ENCODE measurements at regions of chr4 and their contacts with region 1.

Region 1: GRCh38 chr4:87370068-87370467 is 20.9 kb downstream of the HSD17B11 start:
- DNase-seq: no peak
- H3K4me3 ChIP-seq: no peak overlapping the region
- CTCF ChIP-seq: no peak
- POLR2A ChIP-seq: no peak

Region 2: GRCh38 chr4:87304671-87305432 is 65.2 kb before region 1 on chr4:
- intact Hi-C with region 1: no loop called
- DNase-seq: no peak
- H3K4me3 ChIP-seq: no peak overlapping the region
- CTCF ChIP-seq: no peak
- POLR2A ChIP-seq: no peak

Region 3: DNA sequence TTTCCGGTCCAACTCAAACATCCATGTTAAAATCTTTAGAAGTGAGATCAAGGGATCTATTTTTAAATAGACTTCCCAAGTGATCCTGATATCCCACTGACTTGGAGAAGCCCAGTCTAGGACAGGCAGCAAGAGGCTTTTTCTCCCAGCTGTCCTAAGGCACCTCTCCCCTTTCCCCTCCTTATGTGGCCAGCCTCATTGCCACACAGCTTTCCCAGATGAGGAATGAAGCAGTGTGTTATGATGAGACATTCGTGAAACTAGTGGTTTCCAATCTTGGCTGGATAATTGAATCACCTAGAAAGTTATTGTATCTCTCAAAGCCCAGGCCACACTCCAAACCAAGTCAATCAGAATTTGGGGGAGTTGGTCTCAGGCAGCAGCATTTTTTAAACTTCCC is 30.6 kb before region 1 on chr4:
- intact Hi-C with region 1: no loop called
- DNase-seq: no peak
- H3K4me3 ChIP-seq: no peak overlapping the region
- CTCF ChIP-seq: no peak
- POLR2A ChIP-seq: no peak

Region 4: DNA sequence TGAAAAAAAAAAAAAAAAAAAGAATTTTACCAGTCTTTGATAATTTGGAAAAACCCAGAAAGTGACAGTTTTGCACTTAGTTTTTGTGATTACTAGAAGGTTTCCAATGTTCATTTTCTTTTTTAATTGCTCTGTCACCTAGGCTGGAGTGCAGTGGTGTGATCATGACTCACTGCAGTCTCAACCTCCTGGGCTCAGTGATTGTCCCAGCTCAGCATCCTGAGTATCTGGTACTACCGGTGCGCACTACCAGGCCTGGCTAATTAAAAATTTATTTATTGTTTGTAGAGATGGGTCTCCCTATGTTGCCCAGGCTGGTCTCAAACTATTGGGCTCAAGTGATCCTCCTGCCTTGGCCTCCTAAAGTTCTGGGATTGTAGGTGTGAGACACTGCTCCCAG is 55.6 kb after region 1 on chr4:
- intact Hi-C with region 1: loop called (anchors 2 kb)
- DNase-seq: no peak
- H3K4me3 ChIP-seq: no peak overlapping the region
- CTCF ChIP-seq: no peak
- POLR2A ChIP-seq: no peak

Region 5: DNA sequence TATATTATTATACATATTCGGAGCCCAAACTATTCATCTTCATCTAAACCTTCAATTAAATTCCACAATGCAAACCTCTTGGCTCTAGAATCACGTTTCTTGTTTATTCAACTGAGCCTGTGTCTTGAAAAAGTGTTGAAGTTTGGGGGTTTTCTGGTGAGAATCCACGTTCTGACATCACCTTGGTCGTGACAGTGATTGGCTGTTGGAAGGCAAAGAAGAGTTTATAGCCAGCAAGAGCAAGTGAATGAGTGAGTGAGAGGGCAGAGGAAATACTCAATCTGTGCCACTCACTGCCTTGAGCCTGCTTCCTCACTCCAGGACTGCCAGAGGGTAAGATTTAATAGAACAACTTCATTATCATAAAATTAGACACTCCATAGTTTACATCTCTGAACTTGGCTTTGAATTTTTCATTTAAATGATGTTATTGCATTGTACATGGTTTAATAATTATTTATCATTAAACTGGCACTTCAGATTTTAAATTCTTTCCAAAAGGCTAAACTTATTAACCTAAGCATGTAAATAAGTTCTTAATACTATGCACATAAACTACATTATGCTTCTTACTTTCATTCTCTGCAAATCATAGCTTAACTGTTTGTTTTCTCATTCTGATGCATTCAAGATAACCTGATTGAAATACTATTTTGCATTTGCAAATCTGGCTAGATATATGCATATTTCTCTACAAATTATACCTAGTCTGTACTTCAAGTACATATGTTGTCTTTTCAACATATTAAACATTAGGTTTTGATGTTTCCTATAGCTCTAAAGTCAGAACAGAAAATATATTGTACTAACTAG is 429.4 kb after region 1 on chr4 and contains the start of gene IBSP:
- intact Hi-C with region 1: no loop called
- DNase-seq: no peak
- H3K4me3 ChIP-seq: no peak within 1 kb of the TSS
- CTCF ChIP-seq: no peak
- POLR2A ChIP-seq: no peak
- total RNA-seq, gene IBSP: not detected